ENCODE measurements at regions of chr20 and their contacts with region 1.

Region 1: DNA sequence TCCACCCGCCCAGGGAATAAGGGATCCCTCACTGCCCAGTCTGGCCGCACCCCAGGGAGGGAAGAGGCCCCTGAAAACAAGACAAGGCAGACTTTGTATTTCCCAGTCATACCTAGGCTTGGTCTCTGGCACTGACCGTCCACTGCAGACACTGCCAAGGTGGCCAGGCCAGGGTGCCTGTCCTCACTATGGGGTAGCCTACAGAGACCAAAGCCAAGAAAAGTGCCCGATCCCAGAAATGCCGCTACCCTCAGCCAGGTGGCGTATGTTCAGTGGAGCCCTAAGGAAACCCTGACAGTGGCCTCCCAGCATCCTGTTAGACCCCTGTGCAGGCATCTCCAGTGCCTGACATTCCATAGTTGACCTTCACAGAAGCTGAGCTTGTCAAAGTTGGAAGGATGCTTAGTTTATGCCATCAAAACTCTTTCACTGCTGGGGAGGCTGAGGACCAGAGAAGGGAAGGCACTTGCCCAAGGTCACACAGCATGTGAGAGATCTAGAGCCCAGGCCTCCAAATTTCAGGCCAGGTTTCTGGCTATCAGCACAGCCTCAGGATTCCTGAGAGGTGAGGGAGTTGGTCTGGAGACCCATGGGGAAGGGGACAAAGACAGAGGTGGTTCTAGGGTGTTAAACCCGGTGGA is 2.5 kb downstream of the SCRT2 start:
- DNase-seq: no peak
- H3K4me3 Mint-ChIP-seq: no peak overlapping the region
- H3K27ac Mint-ChIP-seq: no peak overlapping the region
- H3K4me1 Mint-ChIP-seq: peaks cover 28% of the 10 kb centered on the region
- H3K27me3 Mint-ChIP-seq: peaks cover 64% of the 10 kb centered on the region
- CTCF ChIP-seq: no peak

Region 2: DNA sequence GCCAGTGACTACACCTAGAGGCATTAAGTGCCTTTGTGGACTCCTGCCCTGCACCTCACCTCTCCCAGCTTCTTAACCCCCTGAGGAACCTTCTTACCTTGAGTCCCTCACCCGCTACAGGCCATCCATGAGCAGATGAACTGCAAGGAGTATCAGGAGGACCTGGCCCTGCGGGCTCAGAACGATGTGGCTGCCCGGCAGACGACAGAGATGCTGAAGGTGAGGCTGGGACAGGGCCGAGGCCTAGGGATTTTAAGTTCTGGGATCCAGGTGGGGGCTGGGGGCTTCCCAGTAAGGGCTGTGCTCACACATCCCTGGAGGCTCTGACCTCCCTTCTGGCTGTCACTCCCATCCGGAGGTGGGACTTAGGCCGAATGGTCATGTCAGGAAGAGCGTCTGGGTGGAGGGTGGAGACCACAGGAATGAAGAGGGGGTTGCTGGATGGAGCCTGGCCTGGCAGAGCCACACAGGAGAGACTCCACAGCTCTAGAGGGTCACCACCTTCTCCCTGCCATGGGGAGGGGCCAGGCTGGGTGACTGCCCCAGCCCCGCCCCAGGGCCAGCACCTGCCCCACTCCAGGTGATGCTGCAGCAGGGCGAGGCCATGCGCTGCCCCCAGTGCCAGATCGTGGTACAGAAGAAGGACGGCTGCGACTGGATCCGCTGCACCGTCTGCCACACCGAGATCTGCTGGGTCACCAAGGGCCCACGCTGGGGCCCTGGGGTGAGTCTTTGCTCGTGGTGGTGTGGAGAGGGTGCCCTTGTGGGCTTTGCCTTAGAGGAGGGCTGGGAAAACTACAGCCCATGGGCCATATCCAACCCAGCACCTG is 244.5 kb before region 1 on chr20:
- CTCF ChIA-PET with region 1: no interaction called
- intact Hi-C with region 1: no loop called
- DNase-seq: no peak
- H3K4me3 Mint-ChIP-seq: no peak overlapping the region
- H3K27ac Mint-ChIP-seq: no peak overlapping the region
- H3K4me1 Mint-ChIP-seq: peaks cover 5% of the 10 kb centered on the region
- H3K27me3 Mint-ChIP-seq: no peaks in the 10 kb centered on the region
- CTCF ChIP-seq: no peak

Region 3: GRCh38 chr20:709423-709822 is 36.3 kb after region 1 on chr20:
- CTCF ChIA-PET with region 1: no interaction called
- intact Hi-C with region 1: no loop called
- DNase-seq: no peak
- H3K4me3 Mint-ChIP-seq: no peak overlapping the region
- H3K27ac Mint-ChIP-seq: no peak overlapping the region
- H3K4me1 Mint-ChIP-seq: no peaks in the 10 kb centered on the region
- H3K27me3 Mint-ChIP-seq: peaks cover 14% of the 10 kb centered on the region
- CTCF ChIP-seq: no peak

Region 4: GRCh38 chr20:728248-728944 is 55.3 kb after region 1 on chr20:
- CTCF ChIA-PET with region 1: no interaction called
- intact Hi-C with region 1: loop called (anchors 5 kb)
- DNase-seq: peak; percentile 80
- H3K4me3 Mint-ChIP-seq: peak overlapping the region; percentile 50
- H3K27ac Mint-ChIP-seq: no peak overlapping the region
- H3K4me1 Mint-ChIP-seq: no peaks in the 10 kb centered on the region
- H3K27me3 Mint-ChIP-seq: peaks cover 56% of the 10 kb centered on the region
- CTCF ChIP-seq: peak; percentile 68

Measured in Calu3 (cell line).